Mammary epithelial cell (primary cell): ENCODE measurements at regions of chr14 and their contacts with region 1.

Region 1: GRCh38 chr14:74257078-74257989 is 18.1 kb downstream of the VSX2 start:
- DNase-seq: no peak
- H3K4me3 ChIP-seq: peak overlapping the region; percentile 50 to 62 (median 53)
- H3K27ac ChIP-seq: no peak overlapping the region
- H3K4me1 ChIP-seq: peaks cover 22% of the 10 kb centered on the region
- H3K27me3 ChIP-seq: no peaks in the 10 kb centered on the region
- CTCF ChIP-seq: peak; percentile 60 to 63

Region 2: DNA sequence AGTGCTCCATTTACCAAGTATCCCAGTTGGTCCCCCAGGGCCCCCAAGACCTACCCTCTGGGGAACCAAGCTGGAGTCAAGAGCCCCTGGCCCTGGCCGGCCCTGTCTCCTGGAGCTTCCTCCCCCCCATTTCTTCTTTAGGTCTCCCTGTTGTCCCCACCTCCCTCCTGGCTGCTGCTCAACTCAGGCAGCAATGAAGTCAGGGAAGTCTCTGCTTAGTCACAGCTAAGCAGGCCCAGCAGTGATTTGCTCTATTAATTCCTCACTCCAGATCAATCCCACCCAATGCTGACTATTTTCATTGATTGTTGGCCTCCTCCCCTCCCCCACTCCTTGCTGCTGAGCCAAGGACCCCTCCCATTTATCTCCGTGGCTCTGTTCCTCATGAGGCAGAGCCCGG is 10.3 kb after region 1 on chr14:
- CTCF ChIA-PET with region 1: interaction called, 17 read pairs
- dilution Hi-C with region 1: no loop called
- in situ Hi-C with region 1: no loop called
- intact Hi-C with region 1: no loop called
- DNase-seq: no peak
- H3K4me3 ChIP-seq: no peak overlapping the region
- H3K27ac ChIP-seq: no peak overlapping the region
- H3K4me1 ChIP-seq: peaks cover 10% of the 10 kb centered on the region
- H3K27me3 ChIP-seq: no peaks in the 10 kb centered on the region
- CTCF ChIP-seq: no peak

Region 3: DNA sequence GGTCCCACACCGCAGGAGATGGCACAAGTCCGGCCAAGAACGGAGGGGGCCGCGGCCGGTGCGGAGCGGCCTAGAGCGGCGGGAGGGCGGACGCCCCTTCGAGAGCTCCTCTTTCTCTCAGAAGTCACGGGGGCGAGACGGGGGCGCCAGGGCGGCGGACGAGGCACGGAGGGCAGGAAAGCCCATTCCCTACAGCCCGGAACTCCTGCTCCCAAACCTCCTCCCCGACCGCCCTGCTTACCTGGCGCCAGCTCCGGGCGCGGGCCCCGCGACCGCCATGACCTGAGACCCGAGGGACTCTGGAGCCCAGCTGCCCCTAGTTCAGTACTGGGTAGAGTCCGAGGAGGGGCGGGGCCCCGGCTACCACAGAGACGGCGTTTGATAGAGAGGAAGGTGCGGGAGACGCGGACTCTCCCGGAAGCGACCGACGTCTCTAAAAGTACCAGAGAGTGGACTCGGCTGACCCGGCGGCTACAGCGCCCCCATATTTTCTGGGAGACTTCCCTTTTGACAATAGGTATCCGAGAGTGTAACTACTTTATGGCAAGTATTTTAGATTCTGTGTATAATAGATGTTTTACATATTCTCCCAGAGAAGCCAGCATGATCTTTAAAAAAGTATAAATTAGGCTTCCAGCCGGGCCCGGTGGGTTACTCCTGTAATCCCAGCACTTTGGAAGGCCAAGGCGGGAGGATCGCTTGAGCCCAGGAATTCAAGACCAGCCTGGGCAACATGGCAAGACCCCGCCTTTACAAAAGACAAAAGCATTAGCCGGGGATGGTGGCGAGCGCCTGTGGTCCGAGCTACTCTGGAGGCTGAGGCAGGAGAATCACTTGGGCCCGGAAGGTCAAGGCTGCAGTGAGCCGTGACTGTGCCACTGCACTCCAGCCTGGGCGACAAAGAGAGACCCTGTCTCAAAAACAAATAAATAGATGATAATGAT is 45.6 kb after region 1 on chr14 and contains the start of gene ABCD4:
- CTCF ChIA-PET with region 1: no interaction called
- dilution Hi-C with region 1: no loop called
- in situ Hi-C with region 1: no loop called
- intact Hi-C with region 1: loop called (anchors 2 kb)
- DNase-seq: peak; percentile 87
- H3K4me3 ChIP-seq: peak within 1 kb of the TSS; percentile 81 to 99 (median 85)
- H3K27ac ChIP-seq: peak within 1 kb of the TSS; percentile 62
- H3K4me1 ChIP-seq: peaks cover 6% of the 10 kb centered on the region
- H3K27me3 ChIP-seq: no peaks in the 10 kb centered on the region
- CTCF ChIP-seq: peak; percentile 42 to 61
- total RNA-seq, gene ABCD4: 30.1 to 31.0 TPM

Region 4: GRCh38 chr14:74595006-74595735 is 337.8 kb after region 1 on chr14:
- CTCF ChIA-PET with region 1: no interaction called
- dilution Hi-C with region 1: no loop called
- in situ Hi-C with region 1: no loop called
- intact Hi-C with region 1: no loop called
- DNase-seq: no peak
- H3K4me3 ChIP-seq: no peak overlapping the region
- H3K27ac ChIP-seq: no peak overlapping the region
- H3K4me1 ChIP-seq: peaks cover 20% of the 10 kb centered on the region
- H3K27me3 ChIP-seq: no peaks in the 10 kb centered on the region
- CTCF ChIP-seq: no peak